ENCODE measurements at regions of chr13 and their contacts with region 1.

Region 1: GRCh38 chr13:20828539-20829364 is 55.0 kb upstream of the EEF1AKMT1 start:
- DNase-seq: peak in 1 of 2 donors; percentile 39
- H3K4me3 ChIP-seq: no peak overlapping the region
- H3K27ac ChIP-seq: peak overlapping the region; percentile 7 to 66
- H3K4me1 ChIP-seq: no peaks in the 10 kb centered on the region
- H3K27me3 ChIP-seq: no peaks in the 10 kb centered on the region
- CTCF ChIP-seq: peak; percentile 76 to 79 (median 78)
- POLR2A ChIP-seq: no peak

Region 2: GRCh38 chr13:20495082-20496023 is 333.4 kb before region 1 on chr13:
- intact Hi-C with region 1: loop called (anchors 10 kb)
- DNase-seq: peak; percentile 43 to 68
- H3K4me3 ChIP-seq: no peak overlapping the region
- H3K27ac ChIP-seq: no peak overlapping the region
- H3K4me1 ChIP-seq: no peaks in the 10 kb centered on the region
- H3K27me3 ChIP-seq: no peaks in the 10 kb centered on the region
- CTCF ChIP-seq: peak; percentile 89 to 93 (median 91)
- POLR2A ChIP-seq: no peak

Region 3: GRCh38 chr13:20713751-20714150 is 115.0 kb before region 1 on chr13:
- intact Hi-C with region 1: loop called (anchors 5 kb)
- DNase-seq: no peak
- H3K4me3 ChIP-seq: no peak overlapping the region
- H3K27ac ChIP-seq: peak overlapping the region in 1 of 2 donors; percentile 48
- H3K4me1 ChIP-seq: no peaks in the 10 kb centered on the region
- H3K27me3 ChIP-seq: no peaks in the 10 kb centered on the region
- CTCF ChIP-seq: no peak
- POLR2A ChIP-seq: no peak

Region 4: GRCh38 chr13:21164631-21165030 is 335.9 kb after region 1 on chr13:
- intact Hi-C with region 1: no loop called
- DNase-seq: no peak
- H3K4me3 ChIP-seq: no peak overlapping the region
- H3K27ac ChIP-seq: no peak overlapping the region
- H3K4me1 ChIP-seq: no peaks in the 10 kb centered on the region
- H3K27me3 ChIP-seq: no peaks in the 10 kb centered on the region
- CTCF ChIP-seq: no peak
- POLR2A ChIP-seq: no peak